ENCODE measurements at regions of chr17 and their contacts with region 1.

Region 1: DNA sequence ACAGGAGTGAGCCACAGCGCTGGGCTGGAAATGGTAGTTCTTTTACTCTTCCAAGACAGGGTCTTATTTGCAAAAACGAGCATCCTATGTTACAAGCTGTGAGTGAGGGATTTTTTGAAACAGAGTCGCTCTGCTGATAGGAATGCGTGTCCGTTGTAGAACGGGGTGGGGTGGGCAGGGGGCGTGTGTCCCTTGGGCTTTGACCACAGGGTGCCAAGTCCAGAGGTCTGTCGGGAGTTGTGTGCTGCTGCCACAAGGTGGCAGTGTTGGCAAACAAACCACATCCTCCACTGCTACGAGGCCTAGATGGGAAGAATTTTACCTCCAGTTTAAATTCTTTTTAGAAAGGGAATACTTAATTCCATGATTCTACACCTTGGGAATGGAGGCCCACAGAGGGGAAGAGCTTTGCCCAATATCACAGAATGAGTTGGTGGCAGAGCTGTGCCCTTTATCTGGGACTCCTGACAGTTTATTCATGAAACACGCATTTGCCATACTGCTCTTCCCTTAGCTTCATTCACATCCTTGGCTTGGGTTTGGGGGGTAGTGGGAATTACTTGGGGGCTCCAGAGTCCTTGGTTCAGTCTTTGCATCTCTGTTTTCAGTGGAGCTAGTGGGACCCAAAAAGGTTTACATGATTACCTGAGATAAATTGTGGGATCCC is 30.6 kb upstream of the ETV4 start:
- DNase-seq: peak; percentile 43
- H3K4me3 ChIP-seq: no peak overlapping the region
- H3K27ac ChIP-seq: no peak overlapping the region
- H3K27me3 ChIP-seq: no peaks in the 10 kb centered on the region
- CTCF ChIP-seq: peak; percentile 94

Region 2: GRCh38 chr17:43517615-43518386 is 58.9 kb before region 1 on chr17:
- CTCF ChIA-PET with region 1: interaction called, 17 read pairs
- POLR2A ChIA-PET with region 1: no interaction called
- DNase-seq: no peak
- H3K4me3 ChIP-seq: no peak overlapping the region
- H3K27ac ChIP-seq: no peak overlapping the region
- H3K27me3 ChIP-seq: no peaks in the 10 kb centered on the region
- CTCF ChIP-seq: no peak

Region 3: DNA sequence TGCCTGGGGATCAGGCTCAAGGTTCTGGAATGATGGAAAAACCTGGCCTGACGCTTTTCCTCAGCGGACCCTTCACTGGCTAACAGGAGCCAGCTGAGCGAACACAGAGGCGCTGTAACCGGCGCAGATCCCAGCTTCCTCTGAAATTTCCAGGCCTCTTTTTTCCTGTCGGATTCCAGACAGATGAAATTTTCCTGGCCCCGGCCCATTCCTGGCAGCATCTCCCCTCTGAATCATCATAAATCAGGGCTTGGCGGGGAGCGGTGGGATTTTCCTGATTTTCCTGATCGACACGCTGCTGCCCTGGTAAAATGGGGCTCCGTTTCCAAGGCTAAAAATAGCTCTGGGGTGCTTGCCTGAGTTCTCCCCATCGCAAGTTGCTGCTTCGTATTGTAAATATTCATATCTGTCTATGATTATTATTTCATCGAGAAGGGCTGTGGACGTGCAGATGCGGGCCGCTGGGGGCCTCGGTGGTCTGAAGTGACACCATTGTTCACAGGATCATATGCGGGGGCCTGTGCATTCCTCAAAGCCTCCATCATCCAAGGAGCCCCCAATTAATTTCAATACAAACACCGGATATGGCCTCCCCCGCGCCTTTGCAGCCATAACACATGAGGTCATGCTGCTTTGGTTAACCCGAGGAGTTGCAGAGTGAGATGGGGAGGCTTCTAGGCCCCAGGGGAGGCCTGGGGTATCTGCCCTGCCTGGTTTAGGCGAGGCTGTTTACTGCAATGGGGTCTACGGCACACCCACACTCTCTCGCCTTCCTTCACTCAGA is 15.3 kb after region 1 on chr17:
- CTCF ChIA-PET with region 1: interaction called, 29 read pairs
- POLR2A ChIA-PET with region 1: interaction called, 8 read pairs
- DNase-seq: peak; percentile 59
- H3K4me3 ChIP-seq: 0 out of 2 replicates have a peak overlapping the region, but pooled peaks have one; percentile 7
- H3K27ac ChIP-seq: peak overlapping the region; percentile 94
- H3K27me3 ChIP-seq: no peaks in the 10 kb centered on the region
- CTCF ChIP-seq: no peak

Region 4: GRCh38 chr17:43673516-43674323 is 97.0 kb after region 1 on chr17:
- CTCF ChIA-PET with region 1: no interaction called
- POLR2A ChIA-PET with region 1: interaction called, 10 read pairs
- DNase-seq: no peak
- H3K4me3 ChIP-seq: no peak overlapping the region
- H3K27ac ChIP-seq: no peak overlapping the region
- H3K27me3 ChIP-seq: peaks cover 3% of the 10 kb centered on the region
- CTCF ChIP-seq: peak; percentile 99

Region 5: GRCh38 chr17:43766413-43767052 is 189.8 kb after region 1 on chr17:
- CTCF ChIA-PET with region 1: interaction called, 21 read pairs
- POLR2A ChIA-PET with region 1: no interaction called
- DNase-seq: no peak
- H3K4me3 ChIP-seq: no peak overlapping the region
- H3K27ac ChIP-seq: no peak overlapping the region
- H3K27me3 ChIP-seq: no peaks in the 10 kb centered on the region
- CTCF ChIP-seq: peak; percentile 82

Measured in AG04450 (cell line).